ENCODE measurements at regions of chr1 and their contacts with region 1.

Region 1: DNA sequence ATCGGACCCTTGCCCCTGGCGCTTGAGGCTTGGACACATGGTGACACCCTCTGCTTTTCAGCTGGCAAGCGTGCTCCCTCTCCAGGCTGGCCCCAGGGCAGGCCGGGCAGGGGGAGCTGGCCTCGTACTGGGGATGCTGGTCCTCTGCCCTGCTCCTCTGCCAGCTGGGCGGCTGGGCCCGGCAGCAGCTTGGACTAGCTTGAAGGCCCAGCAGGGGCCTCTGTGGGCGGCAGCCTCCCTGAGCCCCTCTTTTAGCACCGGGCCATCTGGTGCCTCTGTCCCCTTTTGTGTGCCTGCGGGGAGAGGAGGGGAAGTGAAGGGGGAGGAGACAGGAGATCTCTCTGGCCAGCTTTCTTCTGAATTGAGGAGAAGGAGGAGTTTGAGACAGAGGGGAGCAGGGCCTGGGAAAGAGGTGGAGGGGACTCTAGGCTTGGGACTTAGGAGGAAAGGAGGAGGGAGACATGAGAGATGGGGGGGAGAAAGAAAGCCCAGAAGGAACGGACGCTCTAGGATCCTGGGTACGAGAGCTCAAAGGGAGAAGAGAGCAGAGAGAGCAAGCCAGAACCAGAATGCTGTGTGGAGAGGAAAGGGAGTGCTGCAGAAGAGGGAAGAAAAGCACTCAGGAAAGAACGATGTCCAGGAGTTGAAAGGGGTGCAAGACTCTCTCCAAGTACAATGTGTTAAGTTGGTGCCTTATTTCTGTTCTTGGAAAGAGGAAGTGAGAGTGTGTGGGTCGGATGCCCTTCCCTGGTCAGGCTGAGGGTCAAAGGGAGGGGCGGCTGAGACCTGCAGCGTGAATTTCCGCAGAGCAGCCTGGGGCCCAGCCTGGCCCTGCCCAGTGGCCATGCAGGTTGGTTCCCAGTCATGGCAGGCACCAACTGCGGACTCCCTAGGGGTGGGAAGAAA is 40.3 kb downstream of the IER5 start:
- DNase-seq: peak; percentile 51 to 66 (median 60)
- ATAC-seq: peak; percentile 63
- H3K4me3 ChIP-seq: no peak overlapping the region
- H3K27ac ChIP-seq: peak overlapping the region; percentile 62; the same call in 2 of the 3 replicates
- H3K4me1 ChIP-seq: peaks cover 56 to 58% of the 10 kb centered on the region in 2 experiments
- H3K27me3 ChIP-seq: no peaks in the 10 kb centered on the region
- CTCF ChIP-seq: no peak
- EP300 ChIP-seq: no peak
- POLR2A ChIP-seq: no peak
- RAD21 ChIP-seq: no peak; a peak in 1 of 4 replicates

Region 2: GRCh38 chr1:181021811-181022434 is 106.9 kb before region 1 on chr1:
- CTCF ChIA-PET with region 1: no interaction called
- POLR2A ChIA-PET with region 1: no interaction called
- in situ Hi-C with region 1: no loop called
- intact Hi-C with region 1: no loop called
- DNase-seq: peak; percentile 65 to 91 (median 78)
- ATAC-seq: peak; percentile 84
- H3K4me3 ChIP-seq: peak overlapping the region; percentile 94
- H3K27ac ChIP-seq: peak overlapping the region; percentile 81
- H3K4me1 ChIP-seq: peaks cover 8 to 10% of the 10 kb centered on the region in 2 experiments; a peak in 3 of 5 replicates
- H3K27me3 ChIP-seq: no peaks in the 10 kb centered on the region; a peak in 1 of 5 replicates
- CTCF ChIP-seq: no peak
- EP300 ChIP-seq: no peak
- POLR2A ChIP-seq: 0 out of 2 replicates have a peak, but pooled peaks have one; percentile 69
- RAD21 ChIP-seq: no peak

Region 3: GRCh38 chr1:181099152-181100014 is 29.5 kb before region 1 on chr1:
- CTCF ChIA-PET with region 1: no interaction called
- POLR2A ChIA-PET with region 1: interaction called, 24 read pairs
- in situ Hi-C with region 1: no loop called
- intact Hi-C with region 1: loop called (anchors 2 kb)
- DNase-seq: no peak
- ATAC-seq: no peak
- H3K4me3 ChIP-seq: no peak overlapping the region
- H3K27ac ChIP-seq: peak overlapping the region; percentile 3; the same call in 2 of the 3 replicates
- H3K4me1 ChIP-seq: peaks cover 27 to 57% of the 10 kb centered on the region in 2 experiments
- H3K27me3 ChIP-seq: no peaks in the 10 kb centered on the region
- CTCF ChIP-seq: no peak
- EP300 ChIP-seq: no peak
- POLR2A ChIP-seq: no peak
- RAD21 ChIP-seq: no peak

Region 4: GRCh38 chr1:181105134-181106021 is 23.5 kb before region 1 on chr1:
- CTCF ChIA-PET with region 1: no interaction called
- POLR2A ChIA-PET with region 1: interaction called, 24 read pairs
- in situ Hi-C with region 1: no loop called
- intact Hi-C with region 1: loop called (anchors 2 kb)
- DNase-seq: peak; percentile 97 to 99 (median 99)
- ATAC-seq: peak; percentile 95
- H3K4me3 ChIP-seq: peak overlapping the region; percentile 63
- H3K27ac ChIP-seq: peak overlapping the region; percentile 86
- H3K4me1 ChIP-seq: peaks cover 25 to 65% of the 10 kb centered on the region in 2 experiments
- H3K27me3 ChIP-seq: no peaks in the 10 kb centered on the region
- CTCF ChIP-seq: no peak
- EP300 ChIP-seq: no peak
- POLR2A ChIP-seq: peak; percentile 81
- RAD21 ChIP-seq: peak in 1 of 2 experiments; percentile 33; a peak in 2 of 4 replicates

Region 5: DNA sequence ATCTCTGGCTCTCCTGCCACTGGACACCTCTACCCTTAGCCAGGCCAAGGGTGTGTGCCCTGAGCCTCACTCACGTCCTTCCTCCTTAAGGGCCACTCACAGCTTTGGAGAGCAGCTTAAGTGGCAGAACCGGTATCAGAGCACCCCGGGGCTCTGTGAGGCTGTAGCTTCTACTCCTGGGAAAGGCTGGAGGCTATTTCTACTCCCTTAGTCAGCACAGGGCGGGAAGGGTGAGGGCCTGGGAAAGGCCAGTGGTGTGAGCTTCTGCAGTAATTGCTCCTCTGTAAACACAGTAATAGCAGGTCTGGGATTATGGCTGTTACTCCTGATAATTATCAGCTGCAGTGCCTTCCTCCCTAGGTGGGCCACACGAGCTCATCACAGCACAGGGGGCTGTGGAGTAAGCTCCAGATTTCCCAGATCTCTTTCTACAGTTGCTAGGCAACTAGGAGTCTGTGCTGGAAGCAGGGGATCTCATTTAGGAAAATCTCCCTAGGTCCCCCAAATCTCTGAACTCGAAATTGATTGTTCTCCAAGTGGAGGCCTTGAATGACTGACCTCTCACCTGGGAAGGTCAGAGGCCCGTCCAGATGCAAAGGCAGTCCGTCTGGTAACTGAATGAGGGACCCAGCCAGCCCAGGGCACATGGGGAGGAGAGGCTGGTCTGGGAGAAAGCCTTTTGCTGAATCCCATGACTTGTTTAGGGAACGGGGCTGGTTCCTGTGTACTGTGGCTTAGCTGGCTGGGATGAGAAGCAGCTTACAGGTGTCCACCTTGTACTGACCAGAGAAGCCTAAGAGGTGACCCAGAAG is 11.0 kb before region 1 on chr1:
- CTCF ChIA-PET with region 1: no interaction called
- POLR2A ChIA-PET with region 1: interaction called, 10 read pairs
- in situ Hi-C with region 1: no loop called
- intact Hi-C with region 1: no loop called
- DNase-seq: no peak
- ATAC-seq: peak; percentile 15; the same call in 2 of the 3 replicates
- H3K4me3 ChIP-seq: no peak overlapping the region
- H3K27ac ChIP-seq: no peak overlapping the region
- H3K4me1 ChIP-seq: peaks cover 13 to 16% of the 10 kb centered on the region in 2 experiments
- H3K27me3 ChIP-seq: no peaks in the 10 kb centered on the region
- CTCF ChIP-seq: no peak
- EP300 ChIP-seq: no peak
- POLR2A ChIP-seq: no peak
- RAD21 ChIP-seq: no peak

Measured in K562 (cell line).